ENCODE measurements at regions of chr15 and their contacts with region 1.

Region 1: GRCh38 chr15:29925227-29926082 is 103.2 kb upstream of the TJP1 start:
- DNase-seq: peak; percentile 84 to 92
- ATAC-seq: peak; percentile 81 to 88
- H3K4me3 ChIP-seq: no peak overlapping the region
- H3K27ac ChIP-seq: peak overlapping the region; percentile 70 to 86
- H3K4me1 ChIP-seq: peaks cover 60% of the 10 kb centered on the region
- CTCF ChIP-seq: peak; percentile 97
- EP300 ChIP-seq: peak in 1 of 2 experiments; percentile 32; a peak in 1 of 5 replicates
- POLR2A ChIP-seq: no peak
- RAD21 ChIP-seq: peak; percentile 94 to 99

Region 2: GRCh38 chr15:29631076-29632070 is 294.1 kb before region 1 on chr15:
- CTCF ChIA-PET with region 1: no interaction called
- POLR2A ChIA-PET with region 1: no interaction called
- DNase-seq: no peak
- ATAC-seq: peak in 1 of 2 experiments; percentile 35; a peak in 2 of 6 replicates
- H3K4me3 ChIP-seq: no peak overlapping the region
- H3K27ac ChIP-seq: no peak overlapping the region
- H3K4me1 ChIP-seq: no peaks in the 10 kb centered on the region
- CTCF ChIP-seq: no peak
- EP300 ChIP-seq: no peak
- POLR2A ChIP-seq: no peak
- RAD21 ChIP-seq: no peak

Region 3: GRCh38 chr15:29685155-29686078 is 240.0 kb before region 1 on chr15:
- CTCF ChIA-PET with region 1: interaction called, 12 read pairs
- POLR2A ChIA-PET with region 1: no interaction called
- DNase-seq: no peak
- ATAC-seq: no peak
- H3K4me3 ChIP-seq: no peak overlapping the region
- H3K27ac ChIP-seq: peak overlapping the region in 1 of 2 experiments; percentile 45; a peak in 3 of 6 replicates
- H3K4me1 ChIP-seq: peaks cover 30% of the 10 kb centered on the region
- CTCF ChIP-seq: no peak
- EP300 ChIP-seq: no peak
- POLR2A ChIP-seq: peak; percentile 5; the same call in 1 of the 2 replicates
- RAD21 ChIP-seq: no peak

Region 4: DNA sequence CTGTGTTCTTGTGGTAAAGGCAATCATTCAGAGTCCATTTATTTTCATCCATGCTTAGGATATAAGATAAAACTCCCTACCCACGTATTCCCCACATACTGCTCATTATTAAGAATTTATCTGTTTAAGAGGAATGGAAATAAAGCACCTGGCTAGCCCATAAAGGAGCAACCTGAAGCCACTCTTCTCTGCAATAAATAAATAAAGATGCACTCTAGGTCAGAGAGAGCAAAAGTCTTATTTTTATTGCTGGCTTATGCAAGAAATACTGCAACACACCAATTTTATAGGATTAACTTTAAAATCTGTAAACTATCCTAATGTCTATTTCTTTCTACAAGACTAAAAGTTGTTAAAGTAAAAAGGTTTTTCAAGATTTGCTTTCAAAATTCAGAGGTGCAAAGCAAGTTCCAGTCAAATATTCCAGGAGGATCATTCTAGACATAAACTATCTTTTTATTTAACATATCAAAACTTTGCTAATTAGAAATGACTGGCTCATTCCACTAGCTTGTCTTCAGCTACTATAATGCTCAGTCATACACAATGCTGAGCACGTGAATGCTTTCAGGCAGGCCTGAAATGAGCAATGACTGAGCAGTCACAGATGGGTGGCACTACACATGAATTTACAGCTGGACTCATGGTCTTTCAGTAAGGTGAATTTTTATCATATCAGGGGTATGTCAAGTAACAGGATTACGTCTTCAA is 110.3 kb before region 1 on chr15:
- CTCF ChIA-PET with region 1: interaction called, 52 read pairs
- POLR2A ChIA-PET with region 1: interaction called, 86 read pairs
- DNase-seq: peak in 1 of 2 experiments; percentile 64
- ATAC-seq: peak; percentile 85 to 86
- H3K4me3 ChIP-seq: no peak overlapping the region
- H3K27ac ChIP-seq: peak overlapping the region in 1 of 2 experiments; percentile 58; a peak in 4 of 6 replicates
- H3K4me1 ChIP-seq: peaks cover 64% of the 10 kb centered on the region
- CTCF ChIP-seq: no peak
- EP300 ChIP-seq: no peak
- POLR2A ChIP-seq: no peak
- RAD21 ChIP-seq: no peak

Region 5: DNA sequence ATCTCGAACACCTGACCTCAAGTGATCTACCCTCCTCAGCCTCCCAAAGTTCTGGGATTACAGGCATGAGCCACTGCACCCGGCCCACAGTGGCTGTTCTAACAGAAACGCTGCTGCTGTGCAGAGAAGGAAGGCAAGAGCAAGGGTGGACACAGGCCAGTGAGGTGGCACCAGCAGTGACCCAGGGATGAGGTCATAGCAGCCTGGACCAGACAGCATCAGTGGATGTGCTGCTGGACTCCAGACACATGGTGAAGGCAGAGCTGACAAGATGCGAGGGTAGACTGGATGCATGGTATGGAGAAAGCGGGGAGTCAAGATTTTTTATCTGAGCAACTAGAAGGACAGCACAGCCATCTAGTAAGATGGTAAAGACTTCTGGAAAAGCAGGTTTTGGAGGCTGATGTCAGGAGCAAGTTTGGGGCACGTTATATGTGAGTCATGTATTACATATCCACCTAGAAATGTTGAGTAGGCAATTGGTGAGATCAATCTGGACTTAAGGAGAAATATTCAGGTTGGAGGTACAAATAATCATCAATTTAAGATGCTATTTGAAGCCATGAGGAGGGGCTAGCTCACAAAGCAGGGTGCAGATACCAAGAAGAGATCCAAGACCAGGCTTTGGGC is 81.1 kb before region 1 on chr15:
- CTCF ChIA-PET with region 1: interaction called, 13 read pairs
- POLR2A ChIA-PET with region 1: no interaction called
- DNase-seq: no peak
- ATAC-seq: peak in 1 of 2 experiments; percentile 34; a peak in 2 of 6 replicates
- H3K4me3 ChIP-seq: no peak overlapping the region
- H3K27ac ChIP-seq: peak overlapping the region; percentile 55 to 70; a peak in 5 of 6 replicates
- H3K4me1 ChIP-seq: peaks cover 17% of the 10 kb centered on the region
- CTCF ChIP-seq: no peak
- EP300 ChIP-seq: no peak
- POLR2A ChIP-seq: no peak
- RAD21 ChIP-seq: no peak

Region 6: GRCh38 chr15:29885183-29885582 is 40.3 kb before region 1 on chr15:
- CTCF ChIA-PET with region 1: interaction called, 14 read pairs
- POLR2A ChIA-PET with region 1: no interaction called
- DNase-seq: no peak
- ATAC-seq: no peak
- H3K4me3 ChIP-seq: no peak overlapping the region
- H3K27ac ChIP-seq: no peak overlapping the region
- H3K4me1 ChIP-seq: peaks cover 8% of the 10 kb centered on the region; the same call in 2 of the 3 replicates
- CTCF ChIP-seq: no peak
- EP300 ChIP-seq: no peak
- POLR2A ChIP-seq: no peak
- RAD21 ChIP-seq: no peak

Region 7: DNA sequence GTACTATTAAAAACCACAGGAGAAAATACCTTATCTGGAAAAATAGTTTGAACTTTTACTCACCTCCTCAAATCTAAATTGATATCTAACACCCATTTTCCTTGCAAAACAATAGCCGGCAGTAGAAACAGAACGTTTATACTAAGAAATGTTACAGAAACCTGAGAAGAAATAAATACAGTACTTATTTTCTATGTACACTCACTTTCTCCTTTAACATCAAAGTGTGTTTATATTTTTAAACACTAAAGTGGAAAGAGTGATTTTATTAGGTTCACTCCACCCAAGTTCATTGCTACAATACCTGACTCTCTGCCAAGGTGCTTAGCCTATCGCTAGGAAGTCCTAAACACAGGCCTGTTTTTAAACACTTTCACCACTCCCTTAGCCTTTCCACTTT is 15.4 kb before region 1 on chr15:
- CTCF ChIA-PET with region 1: interaction called, 12 read pairs
- POLR2A ChIA-PET with region 1: interaction called, 3 read pairs
- DNase-seq: no peak
- ATAC-seq: no peak
- H3K4me3 ChIP-seq: no peak overlapping the region
- H3K27ac ChIP-seq: no peak overlapping the region
- H3K4me1 ChIP-seq: peaks cover 13% of the 10 kb centered on the region
- CTCF ChIP-seq: no peak
- EP300 ChIP-seq: no peak
- POLR2A ChIP-seq: no peak
- RAD21 ChIP-seq: no peak

Region 8: DNA sequence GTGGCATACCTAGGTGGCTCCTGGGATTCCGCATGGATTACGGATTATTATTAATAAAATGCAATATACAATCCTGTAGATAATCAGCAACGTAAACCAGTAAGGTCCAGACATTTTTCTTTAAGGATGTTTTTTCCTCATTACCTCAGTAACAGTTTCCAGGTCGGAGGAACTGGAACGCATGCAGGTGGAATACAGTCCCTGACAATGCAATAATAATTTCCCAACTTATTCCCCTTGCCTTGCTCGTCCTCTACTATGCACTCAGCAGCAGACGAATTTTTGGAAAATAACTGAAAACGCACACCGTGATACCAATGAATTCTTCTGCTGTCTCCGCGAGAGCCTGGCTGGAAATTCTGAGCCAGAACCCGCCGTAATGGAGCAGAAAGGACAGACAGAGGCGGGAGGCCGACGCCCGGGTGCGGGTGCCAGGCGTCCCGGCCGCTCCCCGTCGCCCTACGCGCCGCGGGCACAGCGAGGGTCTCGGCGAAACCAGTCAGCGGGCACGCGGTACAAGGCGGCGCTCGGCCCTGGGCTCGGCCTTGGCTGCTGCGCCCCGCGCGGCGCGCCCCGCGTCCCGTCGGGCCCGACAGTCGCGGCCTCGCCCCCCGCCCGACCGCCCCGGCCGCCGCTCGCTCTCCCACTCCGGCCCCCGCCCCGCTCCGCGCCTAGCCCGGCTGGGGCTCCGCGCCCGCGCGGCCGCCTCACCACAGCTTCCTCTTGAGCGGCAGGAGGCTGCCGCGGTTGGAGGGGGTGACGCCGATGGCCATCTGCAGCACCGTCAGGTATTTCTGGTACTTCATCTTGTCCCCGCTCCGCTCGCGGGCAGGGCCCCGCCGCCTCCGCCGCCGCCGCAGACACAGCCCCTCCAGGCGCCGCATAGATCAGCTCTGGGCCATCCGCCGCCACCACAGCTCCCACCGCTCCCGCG is 42.8 kb after region 1 on chr15:
- CTCF ChIA-PET with region 1: interaction called, 11 read pairs
- POLR2A ChIA-PET with region 1: no interaction called
- DNase-seq: peak; percentile 35 to 39
- ATAC-seq: peak; percentile 74 to 84
- H3K4me3 ChIP-seq: peak overlapping the region; percentile 70
- H3K27ac ChIP-seq: peak overlapping the region; percentile 70 to 89
- H3K4me1 ChIP-seq: peaks cover 5% of the 10 kb centered on the region; the same call in 1 of the 3 replicates
- CTCF ChIP-seq: no peak
- EP300 ChIP-seq: no peak
- POLR2A ChIP-seq: no peak
- RAD21 ChIP-seq: no peak

Region 9: GRCh38 chr15:30056166-30056565 is 130.7 kb after region 1 on chr15:
- CTCF ChIA-PET with region 1: no interaction called
- POLR2A ChIA-PET with region 1: no interaction called
- DNase-seq: no peak
- ATAC-seq: no peak
- H3K4me3 ChIP-seq: no peak overlapping the region
- H3K27ac ChIP-seq: no peak overlapping the region
- H3K4me1 ChIP-seq: no peaks in the 10 kb centered on the region
- CTCF ChIP-seq: no peak
- EP300 ChIP-seq: no peak
- POLR2A ChIP-seq: no peak
- RAD21 ChIP-seq: no peak

Measured in A549 (cell line).